Natural killer cell (primary cell): ENCODE measurements at regions of chr11 and their contacts with region 1.

Region 1: DNA sequence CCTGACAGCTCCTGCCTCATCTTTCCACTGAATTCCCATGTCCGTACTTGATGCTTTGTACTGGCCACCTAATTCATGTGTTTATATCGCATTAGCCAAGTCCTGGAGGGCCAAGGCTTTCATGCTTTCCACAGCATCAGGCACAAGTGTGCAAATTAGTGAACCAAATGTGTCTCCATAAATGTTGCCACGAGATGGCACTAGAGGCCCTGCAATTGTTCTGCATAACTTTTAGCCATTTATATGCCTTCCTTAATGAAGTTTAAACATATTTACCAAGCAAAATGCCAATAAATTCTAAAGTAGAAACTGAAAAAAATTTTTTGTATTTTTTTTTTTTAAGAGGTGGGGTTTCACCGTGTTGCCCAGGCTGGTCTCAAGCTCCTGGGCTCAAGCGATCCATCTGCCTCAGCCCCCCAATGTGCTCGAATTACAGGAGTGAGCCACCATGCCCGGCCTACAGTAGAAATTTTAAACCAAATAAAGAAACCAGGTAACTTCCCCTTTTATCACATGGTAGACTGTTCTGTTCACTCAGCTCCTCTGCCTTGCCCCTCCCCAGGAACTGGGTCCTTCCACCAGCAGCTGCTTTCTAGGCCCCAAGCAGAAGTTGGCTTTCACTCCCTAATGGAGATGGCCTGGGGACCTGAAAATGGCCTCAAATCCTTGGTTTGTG is 20.8 kb upstream of the IL18BP start:
- DNase-seq: peak; percentile 31 to 75
- ATAC-seq: peak; percentile 61 to 75 (median 68)
- H3K4me3 ChIP-seq: no peak overlapping the region
- H3K4me3 Mint-ChIP-seq: no peak overlapping the region
- H3K27ac ChIP-seq: peak overlapping the region; percentile 9
- H3K27ac Mint-ChIP-seq: peak overlapping the region in 1 of 2 donors; percentile 56
- H3K4me1 ChIP-seq: no peaks in the 10 kb centered on the region
- H3K4me1 Mint-ChIP-seq: peaks cover 4% of the 10 kb centered on the region in 2 donors
- H3K27me3 ChIP-seq: no peaks in the 10 kb centered on the region
- H3K27me3 Mint-ChIP-seq: no peaks in the 10 kb centered on the region
- CTCF ChIP-seq: peak; percentile 70

Region 2: DNA sequence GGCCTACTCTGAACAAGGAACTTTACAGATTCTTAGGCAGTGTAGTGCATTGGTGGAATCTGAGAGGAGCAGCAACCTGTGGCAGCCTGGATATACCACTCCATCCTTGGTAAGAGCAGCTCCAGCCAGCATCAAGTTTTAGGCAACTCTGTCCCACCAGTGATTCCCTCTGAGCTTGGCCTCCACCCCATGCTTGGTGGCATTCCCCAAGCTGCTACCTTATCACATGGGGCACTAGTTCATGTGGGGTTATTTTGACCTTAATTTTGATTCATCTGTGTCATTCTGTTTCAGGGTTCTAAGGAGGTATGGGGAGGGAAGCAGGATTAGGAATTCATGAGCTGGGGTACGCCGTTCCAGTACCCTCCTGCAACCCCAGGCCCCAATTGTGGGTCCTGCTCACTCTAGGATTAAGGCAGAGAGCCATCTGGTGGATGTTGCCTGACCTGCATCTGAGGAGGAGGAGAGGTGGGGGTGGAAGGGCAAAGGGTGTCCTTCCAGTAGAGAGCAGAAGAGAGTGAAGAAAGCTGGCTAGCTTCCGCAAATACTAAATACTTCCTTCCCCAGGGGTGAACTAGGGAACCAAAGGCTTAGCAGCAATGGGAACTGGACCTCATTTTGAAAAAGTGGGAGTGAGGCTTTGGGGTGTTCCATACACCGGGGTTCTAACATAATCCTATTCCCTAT is 113.3 kb after region 1 on chr11:
- intact Hi-C with region 1: loop called (anchors 5 kb)
- DNase-seq: peak; percentile 56 to 85
- ATAC-seq: peak; percentile 92 to 100 (median 97)
- H3K4me3 ChIP-seq: no peak overlapping the region
- H3K4me3 Mint-ChIP-seq: no peak overlapping the region
- H3K27ac ChIP-seq: no peak overlapping the region
- H3K27ac Mint-ChIP-seq: peak overlapping the region in 1 of 2 donors; percentile 42
- H3K4me1 ChIP-seq: no peaks in the 10 kb centered on the region
- H3K4me1 Mint-ChIP-seq: peaks cover 0 to 15% of the 10 kb centered on the region in 2 donors
- H3K27me3 ChIP-seq: no peaks in the 10 kb centered on the region
- H3K27me3 Mint-ChIP-seq: no peaks in the 10 kb centered on the region
- CTCF ChIP-seq: peak; percentile 84

Region 3: GRCh38 chr11:72144807-72145560 is 167.1 kb after region 1 on chr11:
- intact Hi-C with region 1: loop called (anchors 1 kb)
- DNase-seq: no peak
- ATAC-seq: no peak
- H3K4me3 ChIP-seq: no peak overlapping the region
- H3K4me3 Mint-ChIP-seq: no peak overlapping the region
- H3K27ac ChIP-seq: no peak overlapping the region
- H3K27ac Mint-ChIP-seq: no peak overlapping the region
- H3K4me1 ChIP-seq: peaks cover 3% of the 10 kb centered on the region
- H3K4me1 Mint-ChIP-seq: peaks cover 4% of the 10 kb centered on the region in 2 donors
- H3K27me3 ChIP-seq: no peaks in the 10 kb centered on the region
- H3K27me3 Mint-ChIP-seq: peaks cover 0 to 7% of the 10 kb centered on the region in 2 donors
- CTCF ChIP-seq: no peak

Region 4: DNA sequence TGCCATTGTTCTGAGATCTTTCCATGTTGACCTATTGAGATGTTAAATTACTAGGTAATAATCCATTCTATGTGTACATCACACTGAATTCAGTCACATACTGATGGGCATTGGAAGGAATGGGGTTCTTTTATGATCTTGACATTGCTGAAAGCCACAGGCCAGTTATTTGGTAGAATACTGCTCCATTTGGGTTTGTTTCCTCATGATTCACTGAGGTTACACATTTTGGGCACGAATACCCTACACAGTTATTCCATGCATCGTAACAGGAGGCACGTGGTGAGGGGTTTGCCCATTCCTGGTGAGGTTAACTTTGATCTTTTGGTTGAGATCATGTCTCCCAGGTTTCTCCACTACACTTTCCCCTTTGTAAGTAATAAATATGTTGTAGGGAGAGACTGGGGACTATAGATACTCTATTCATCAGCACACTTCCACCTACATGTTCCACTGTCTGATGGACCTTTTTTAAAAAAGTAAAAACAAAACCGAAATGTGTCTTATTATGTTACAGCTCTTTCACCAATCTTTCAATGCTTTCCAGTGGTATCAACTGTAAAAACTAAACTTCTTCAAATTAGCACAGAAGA is 202.0 kb after region 1 on chr11:
- intact Hi-C with region 1: loop called (anchors 2 kb)
- DNase-seq: no peak
- ATAC-seq: no peak
- H3K4me3 ChIP-seq: no peak overlapping the region
- H3K4me3 Mint-ChIP-seq: no peak overlapping the region
- H3K27ac ChIP-seq: no peak overlapping the region
- H3K27ac Mint-ChIP-seq: no peak overlapping the region
- H3K4me1 ChIP-seq: no peaks in the 10 kb centered on the region
- H3K4me1 Mint-ChIP-seq: peaks cover 6 to 9% of the 10 kb centered on the region in 2 donors
- H3K27me3 ChIP-seq: no peaks in the 10 kb centered on the region
- H3K27me3 Mint-ChIP-seq: peaks cover 9 to 23% of the 10 kb centered on the region in 2 donors
- CTCF ChIP-seq: no peak

Region 5: DNA sequence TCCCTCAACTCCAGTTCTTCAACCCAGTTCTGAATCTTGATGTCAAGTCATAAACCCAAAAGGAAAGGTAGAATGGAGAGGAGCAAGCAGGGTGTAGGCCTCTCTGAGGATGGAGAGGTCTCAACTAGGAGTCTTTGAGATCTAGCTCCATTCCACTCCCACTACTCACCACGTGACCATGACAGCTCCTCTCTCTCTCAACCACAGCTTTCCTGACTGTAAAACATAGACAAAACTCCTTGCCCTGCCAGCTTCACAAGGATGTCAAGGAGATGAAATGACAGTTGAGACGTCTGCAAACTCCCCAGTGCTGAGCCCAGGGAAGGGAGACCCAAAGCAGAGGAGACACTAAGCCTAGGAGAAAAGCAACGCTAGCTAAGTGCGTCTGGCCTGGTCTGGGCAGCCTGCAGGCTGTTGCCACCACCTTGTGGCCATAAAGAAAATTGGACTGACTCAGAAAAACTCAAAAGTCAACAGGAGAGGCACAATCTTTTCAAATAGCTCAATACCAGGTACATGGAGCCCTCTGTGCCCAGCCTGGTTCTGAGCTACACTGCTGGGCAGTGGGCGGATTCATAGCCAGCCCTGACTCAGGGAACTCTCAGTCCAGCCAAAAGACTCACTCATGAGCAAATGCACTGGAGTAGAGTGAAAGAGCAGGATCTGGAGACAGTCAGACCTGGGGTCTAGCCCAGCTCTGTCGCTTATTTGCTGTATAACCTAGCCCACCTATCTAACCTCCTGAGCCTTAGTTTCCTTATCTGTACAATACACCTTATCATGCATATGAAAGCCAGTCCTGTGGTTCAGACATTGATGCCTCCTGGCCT is 453.1 kb after region 1 on chr11:
- intact Hi-C with region 1: loop called (anchors 5 kb)
- DNase-seq: peak in 1 of 2 donors; percentile 70
- ATAC-seq: no peak
- H3K4me3 ChIP-seq: no peak overlapping the region
- H3K4me3 Mint-ChIP-seq: peak overlapping the region; percentile 35
- H3K27ac ChIP-seq: no peak overlapping the region
- H3K27ac Mint-ChIP-seq: peak overlapping the region; percentile 43 to 78
- H3K4me1 ChIP-seq: peaks cover 24% of the 10 kb centered on the region
- H3K4me1 Mint-ChIP-seq: peaks cover 35 to 50% of the 10 kb centered on the region in 2 donors
- H3K27me3 ChIP-seq: no peaks in the 10 kb centered on the region
- H3K27me3 Mint-ChIP-seq: no peaks in the 10 kb centered on the region
- CTCF ChIP-seq: peak; percentile 53